ENCODE measurements at regions of chr4 and their contacts with region 1.

Region 1: DNA sequence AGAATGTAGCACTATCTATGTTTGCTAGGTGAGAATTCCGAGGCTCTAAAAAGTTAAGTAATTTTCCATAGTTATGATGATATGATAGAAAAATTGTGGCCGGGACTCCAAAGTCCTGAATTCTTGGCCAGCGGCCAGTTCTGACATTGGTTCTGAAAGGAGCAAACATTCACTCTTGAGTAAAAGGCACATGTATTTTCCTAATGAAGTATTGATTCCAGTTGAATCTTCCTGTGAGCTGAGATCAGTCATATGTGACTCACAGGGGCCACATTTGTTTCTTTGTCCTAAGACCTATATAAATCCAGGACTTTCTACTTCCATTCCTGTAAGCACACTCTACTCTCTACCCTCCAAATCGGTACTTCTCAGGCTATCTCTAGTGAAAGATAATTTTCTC is 349.9 kb downstream of the BMPR1B start:
- DNase-seq: peak; percentile 64
- ATAC-seq: peak; percentile 47
- H3K4me3 ChIP-seq: no peak overlapping the region
- H3K27ac ChIP-seq: no peak overlapping the region
- H3K4me1 ChIP-seq: peaks cover 9% of the 10 kb centered on the region; the same call in 1 of the 2 replicates
- H3K27me3 ChIP-seq: peaks cover 4% of the 10 kb centered on the region
- CTCF ChIP-seq: no peak
- POLR2A ChIP-seq: no peak
- RAD21 ChIP-seq: no peak

Region 2: GRCh38 chr4:94629837-94630236 is 477.8 kb before region 1 on chr4:
- CTCF ChIA-PET with region 1: no interaction called
- POLR2A ChIA-PET with region 1: no interaction called
- dilution Hi-C with region 1: loop called (anchors 25 kb)
- in situ Hi-C with region 1: loop called (anchors 5 kb)
- intact Hi-C with region 1: no loop called
- DNase-seq: no peak
- ATAC-seq: no peak
- H3K4me3 ChIP-seq: no peak overlapping the region
- H3K27ac ChIP-seq: no peak overlapping the region
- H3K4me1 ChIP-seq: peaks cover 3% of the 10 kb centered on the region; the same call in 1 of the 2 replicates
- H3K27me3 ChIP-seq: no peaks in the 10 kb centered on the region
- CTCF ChIP-seq: no peak
- POLR2A ChIP-seq: no peak
- RAD21 ChIP-seq: no peak

Region 3: DNA sequence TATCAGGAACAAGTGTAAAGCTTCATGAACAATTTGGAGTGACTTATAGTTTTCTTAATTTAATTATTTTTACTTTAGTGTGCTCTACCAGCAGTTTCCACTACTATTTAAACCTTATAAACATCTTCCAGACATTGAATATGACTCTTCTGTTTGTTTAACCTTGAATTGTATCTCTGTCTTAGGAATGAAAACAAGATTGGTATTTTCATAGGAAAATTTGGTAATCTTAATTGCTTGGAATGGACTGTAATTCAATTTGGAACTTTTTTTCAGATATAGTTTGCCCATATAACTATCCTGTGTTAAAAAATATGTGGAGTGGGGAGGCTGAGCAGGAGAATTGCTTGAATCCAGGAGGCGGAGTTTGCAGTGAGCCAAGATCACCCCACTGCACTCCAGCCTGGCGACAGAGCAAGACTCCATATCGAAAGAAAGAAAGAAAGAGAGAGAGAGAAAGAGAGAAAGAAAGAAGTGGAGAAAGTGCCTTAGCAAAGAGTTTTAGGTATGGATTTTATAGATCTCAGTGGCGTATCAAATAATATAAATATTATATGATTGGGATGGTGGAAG is 107.5 kb before region 1 on chr4:
- CTCF ChIA-PET with region 1: no interaction called
- POLR2A ChIA-PET with region 1: no interaction called
- dilution Hi-C with region 1: no loop called
- in situ Hi-C with region 1: no loop called
- intact Hi-C with region 1: no loop called
- DNase-seq: no peak
- ATAC-seq: no peak
- H3K4me3 ChIP-seq: no peak overlapping the region
- H3K27ac ChIP-seq: no peak overlapping the region
- H3K4me1 ChIP-seq: peaks cover 3% of the 10 kb centered on the region; the same call in 1 of the 2 replicates
- H3K27me3 ChIP-seq: no peaks in the 10 kb centered on the region
- CTCF ChIP-seq: no peak
- POLR2A ChIP-seq: no peak
- RAD21 ChIP-seq: no peak

Measured in IMR-90 (cell line).